BJ (cell line): ENCODE measurements at regions of chr11 and their contacts with region 1.

Region 1: GRCh38 chr11:112392904-112393303 is 132.2 kb upstream of the PLET1 start:
- DNase-seq: no peak
- H3K4me3 ChIP-seq: no peak overlapping the region
- H3K27me3 ChIP-seq: peaks cover 2% of the 10 kb centered on the region; the same call in 1 of the 2 replicates
- CTCF ChIP-seq: no peak

Region 2: GRCh38 chr11:112410325-112410724 is 17.4 kb after region 1 on chr11:
- CTCF ChIA-PET with region 1: no interaction called
- POLR2A ChIA-PET with region 1: no interaction called
- DNase-seq: no peak
- H3K4me3 ChIP-seq: no peak overlapping the region
- H3K27me3 ChIP-seq: peaks cover 3% of the 10 kb centered on the region
- CTCF ChIP-seq: no peak

Region 3: GRCh38 chr11:112421879-112422278 is 29.0 kb after region 1 on chr11:
- CTCF ChIA-PET with region 1: no interaction called
- POLR2A ChIA-PET with region 1: interaction called, 12 read pairs
- DNase-seq: no peak
- H3K4me3 ChIP-seq: no peak overlapping the region
- H3K27me3 ChIP-seq: peaks cover 3% of the 10 kb centered on the region; the same call in 1 of the 2 replicates
- CTCF ChIP-seq: no peak